ENCODE measurements at regions of chr2 and their contacts with region 1.

Region 1: GRCh38 chr2:225660262-225661131 is 261.0 kb downstream of the NYAP2 start:
- DNase-seq: peak; percentile 37 to 82 (median 72)
- ATAC-seq: peak; percentile 62
- H3K4me3 ChIP-seq: no peak overlapping the region
- H3K4me3 Mint-ChIP-seq: no peak overlapping the region
- H3K27ac ChIP-seq: no peak overlapping the region
- H3K27ac Mint-ChIP-seq: no peak overlapping the region
- H3K4me1 ChIP-seq: no peaks in the 10 kb centered on the region
- H3K4me1 Mint-ChIP-seq: peaks cover 2% of the 10 kb centered on the region
- H3K27me3 ChIP-seq: no peaks in the 10 kb centered on the region
- H3K27me3 Mint-ChIP-seq: peaks cover 15% of the 10 kb centered on the region
- CTCF ChIP-seq: peak; percentile 90

Region 2: GRCh38 chr2:224357098-224357901 is 1303.2 kb before region 1 on chr2:
- CTCF ChIA-PET with region 1: interaction called, 3 read pairs
- POLR2A ChIA-PET with region 1: no interaction called
- intact Hi-C with region 1: loop called (anchors 1 to 5 kb)
- DNase-seq: peak in 8 of 9 experiments; percentile 16 to 73 (median 54)
- ATAC-seq: peak; percentile 57
- H3K4me3 ChIP-seq: no peak overlapping the region
- H3K4me3 Mint-ChIP-seq: no peak overlapping the region
- H3K27ac ChIP-seq: no peak overlapping the region
- H3K27ac Mint-ChIP-seq: no peak overlapping the region
- H3K4me1 ChIP-seq: no peaks in the 10 kb centered on the region
- H3K4me1 Mint-ChIP-seq: no peaks in the 10 kb centered on the region
- H3K27me3 ChIP-seq: no peaks in the 10 kb centered on the region
- H3K27me3 Mint-ChIP-seq: peaks cover 4% of the 10 kb centered on the region
- CTCF ChIP-seq: peak; percentile 88

Region 3: DNA sequence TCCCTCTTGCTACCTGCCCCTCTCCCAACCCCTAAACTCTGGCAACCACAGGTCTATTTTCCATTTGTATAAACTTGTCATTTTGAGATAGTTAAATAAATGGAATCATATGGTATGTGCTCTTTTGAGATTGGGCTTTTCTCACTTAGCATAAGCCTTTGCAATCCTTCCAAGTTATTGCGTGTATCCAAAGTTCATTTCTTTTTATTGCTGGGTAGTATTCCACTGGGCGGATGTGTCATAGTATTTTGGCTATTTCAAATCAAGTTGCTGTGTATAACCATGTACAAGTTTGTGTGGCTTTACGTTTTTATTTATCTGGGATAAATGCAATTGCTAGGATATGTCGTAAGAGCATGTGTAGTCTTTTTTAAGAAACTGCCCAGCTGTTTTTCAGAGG is 1019.8 kb before region 1 on chr2:
- CTCF ChIA-PET with region 1: no interaction called
- POLR2A ChIA-PET with region 1: no interaction called
- intact Hi-C with region 1: loop called in 1 of 2 experiments (anchors 5 kb)
- DNase-seq: no peak
- ATAC-seq: no peak
- H3K4me3 ChIP-seq: no peak overlapping the region
- H3K4me3 Mint-ChIP-seq: no peak overlapping the region
- H3K27ac ChIP-seq: no peak overlapping the region
- H3K27ac Mint-ChIP-seq: no peak overlapping the region
- H3K4me1 ChIP-seq: no peaks in the 10 kb centered on the region
- H3K4me1 Mint-ChIP-seq: peaks cover 10% of the 10 kb centered on the region
- H3K27me3 ChIP-seq: peaks cover 0 to 2% of the 10 kb centered on the region in 2 experiments
- H3K27me3 Mint-ChIP-seq: peaks cover 7% of the 10 kb centered on the region
- CTCF ChIP-seq: no peak

Region 4: GRCh38 chr2:224885836-224886547 is 774.5 kb before region 1 on chr2:
- CTCF ChIA-PET with region 1: no interaction called
- POLR2A ChIA-PET with region 1: no interaction called
- intact Hi-C with region 1: loop called in 1 of 2 experiments (anchors 10 kb)
- DNase-seq: peak in 1 of 9 experiments; percentile 18
- ATAC-seq: no peak
- H3K4me3 ChIP-seq: no peak overlapping the region
- H3K4me3 Mint-ChIP-seq: no peak overlapping the region
- H3K27ac ChIP-seq: peak overlapping the region in 1 of 2 experiments; percentile 12
- H3K27ac Mint-ChIP-seq: peak overlapping the region; percentile 84
- H3K4me1 ChIP-seq: peaks cover 11% of the 10 kb centered on the region
- H3K4me1 Mint-ChIP-seq: peaks cover 46% of the 10 kb centered on the region
- H3K27me3 ChIP-seq: no peaks in the 10 kb centered on the region
- H3K27me3 Mint-ChIP-seq: no peaks in the 10 kb centered on the region
- CTCF ChIP-seq: no peak

Region 5: DNA sequence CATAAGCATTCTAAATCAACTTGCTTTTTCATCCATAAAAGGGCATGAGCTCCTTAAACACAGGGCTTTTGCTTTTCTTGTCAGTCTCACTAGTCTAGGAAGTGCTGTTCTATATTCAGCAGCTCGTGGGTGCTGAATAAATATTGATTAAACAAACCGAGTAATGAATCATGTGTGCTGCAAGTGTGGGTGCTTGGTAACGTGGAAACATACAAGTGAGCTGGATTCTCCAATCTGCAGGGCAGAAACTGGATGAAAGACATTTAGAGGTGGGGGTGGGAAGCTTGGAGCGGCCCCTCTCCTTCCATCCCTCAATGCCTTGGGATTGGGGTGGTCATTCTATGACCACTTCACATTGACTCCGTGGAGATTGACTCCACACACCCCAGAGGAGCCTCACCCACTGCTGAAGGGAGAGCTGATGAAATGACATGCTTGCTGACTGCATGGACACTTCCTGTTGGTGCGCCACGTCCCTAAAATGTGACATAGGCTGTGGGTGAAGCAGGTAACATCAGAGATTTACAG is 732.8 kb before region 1 on chr2:
- CTCF ChIA-PET with region 1: interaction called, 4 read pairs
- POLR2A ChIA-PET with region 1: no interaction called
- intact Hi-C with region 1: loop called in 1 of 2 experiments (anchors 5 kb)
- DNase-seq: peak; percentile 39 to 93 (median 65)
- ATAC-seq: peak; percentile 81
- H3K4me3 ChIP-seq: no peak overlapping the region
- H3K4me3 Mint-ChIP-seq: peak overlapping the region; percentile 62
- H3K27ac ChIP-seq: peak overlapping the region; percentile 77 to 84
- H3K27ac Mint-ChIP-seq: peak overlapping the region; percentile 99
- H3K4me1 ChIP-seq: peaks cover 94% of the 10 kb centered on the region
- H3K4me1 Mint-ChIP-seq: peaks cover 97% of the 10 kb centered on the region
- H3K27me3 ChIP-seq: no peaks in the 10 kb centered on the region
- H3K27me3 Mint-ChIP-seq: no peaks in the 10 kb centered on the region
- CTCF ChIP-seq: no peak

Region 6: GRCh38 chr2:225122583-225123486 is 537.7 kb before region 1 on chr2:
- CTCF ChIA-PET with region 1: interaction called, 3 read pairs
- POLR2A ChIA-PET with region 1: no interaction called
- intact Hi-C with region 1: loop called (anchors 2 kb)
- DNase-seq: peak in 4 of 9 experiments; percentile 4 to 43 (median 28)
- ATAC-seq: no peak
- H3K4me3 ChIP-seq: no peak overlapping the region
- H3K4me3 Mint-ChIP-seq: no peak overlapping the region
- H3K27ac ChIP-seq: no peak overlapping the region
- H3K27ac Mint-ChIP-seq: no peak overlapping the region
- H3K4me1 ChIP-seq: peaks cover 3% of the 10 kb centered on the region
- H3K4me1 Mint-ChIP-seq: peaks cover 3% of the 10 kb centered on the region
- H3K27me3 ChIP-seq: no peaks in the 10 kb centered on the region
- H3K27me3 Mint-ChIP-seq: no peaks in the 10 kb centered on the region
- CTCF ChIP-seq: peak; percentile 61

Region 7: DNA sequence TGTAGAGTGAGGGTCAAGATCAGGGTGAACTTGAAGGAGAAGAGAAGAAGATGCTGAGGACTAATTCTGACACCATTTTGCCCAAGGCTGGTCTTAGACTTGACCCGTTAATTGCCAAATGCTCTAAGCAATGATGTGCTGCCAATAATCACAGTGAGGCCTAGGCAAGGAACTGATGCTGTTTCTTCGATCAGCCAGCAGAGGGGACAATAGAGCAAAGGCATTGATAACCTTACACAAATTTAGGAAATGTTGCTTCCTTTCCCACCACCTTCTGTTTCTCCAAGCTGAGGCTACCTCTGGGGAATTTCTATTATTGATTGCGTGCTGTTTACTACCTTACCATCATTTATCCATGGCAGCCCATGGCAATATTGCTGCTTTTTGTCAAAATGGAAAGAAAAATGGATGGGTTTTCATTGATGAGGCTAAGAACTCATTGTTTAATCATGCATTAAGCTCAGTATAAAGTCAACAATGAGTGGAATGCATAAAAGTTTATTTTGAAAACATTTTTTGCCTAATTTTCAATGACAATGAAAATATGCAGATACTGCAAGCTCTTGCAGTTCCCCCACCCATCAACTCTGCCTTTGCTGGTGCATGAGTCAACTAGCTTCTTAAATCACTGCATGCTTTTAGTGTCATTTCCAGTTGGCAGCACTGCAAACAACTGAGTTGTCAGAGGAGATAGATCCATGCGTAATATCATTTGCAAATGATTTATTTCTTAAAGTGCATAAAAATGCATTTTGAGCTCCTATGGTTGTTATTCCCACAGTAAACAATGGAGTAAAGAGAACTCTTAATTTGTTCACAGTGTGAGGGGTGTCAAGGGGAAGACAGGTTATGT is 377.4 kb before region 1 on chr2:
- CTCF ChIA-PET with region 1: interaction called, 23 read pairs
- POLR2A ChIA-PET with region 1: no interaction called
- intact Hi-C with region 1: loop called in 1 of 2 experiments (anchors 2 kb)
- DNase-seq: peak in 4 of 9 experiments; percentile 15 to 50 (median 26)
- ATAC-seq: no peak
- H3K4me3 ChIP-seq: no peak overlapping the region
- H3K4me3 Mint-ChIP-seq: no peak overlapping the region
- H3K27ac ChIP-seq: no peak overlapping the region
- H3K27ac Mint-ChIP-seq: no peak overlapping the region
- H3K4me1 ChIP-seq: no peaks in the 10 kb centered on the region
- H3K4me1 Mint-ChIP-seq: no peaks in the 10 kb centered on the region
- H3K27me3 ChIP-seq: no peaks in the 10 kb centered on the region
- H3K27me3 Mint-ChIP-seq: no peaks in the 10 kb centered on the region
- CTCF ChIP-seq: peak; percentile 66

Region 8: GRCh38 chr2:225534697-225535096 is 125.8 kb before region 1 on chr2:
- CTCF ChIA-PET with region 1: no interaction called
- POLR2A ChIA-PET with region 1: no interaction called
- intact Hi-C with region 1: no loop called
- DNase-seq: no peak
- ATAC-seq: no peak
- H3K4me3 ChIP-seq: no peak overlapping the region
- H3K4me3 Mint-ChIP-seq: no peak overlapping the region
- H3K27ac ChIP-seq: no peak overlapping the region
- H3K27ac Mint-ChIP-seq: no peak overlapping the region
- H3K4me1 ChIP-seq: no peaks in the 10 kb centered on the region
- H3K4me1 Mint-ChIP-seq: no peaks in the 10 kb centered on the region
- H3K27me3 ChIP-seq: no peaks in the 10 kb centered on the region
- H3K27me3 Mint-ChIP-seq: peaks cover 13% of the 10 kb centered on the region
- CTCF ChIP-seq: no peak

Measured in CD8-positive, alpha-beta T cell (primary cell).